Left ventricle myocardium inferior (tissue), 1 donor: ENCODE measurements at regions of chr12 and their contacts with region 1.

Region 1: GRCh38 chr12:106386813-106387535 is 29.4 kb downstream of the POLR3B start:
- DNase-seq: no peak
- H3K4me3 ChIP-seq: no peak overlapping the region
- H3K27ac ChIP-seq: no peak overlapping the region
- H3K4me1 ChIP-seq: no peaks in the 10 kb centered on the region
- H3K27me3 ChIP-seq: no peaks in the 10 kb centered on the region
- CTCF ChIP-seq: no peak

Region 2: GRCh38 chr12:106179086-106179485 is 207.9 kb before region 1 on chr12:
- intact Hi-C with region 1: no loop called
- DNase-seq: no peak
- H3K4me3 ChIP-seq: no peak overlapping the region
- H3K27ac ChIP-seq: peak overlapping the region; percentile 69
- H3K4me1 ChIP-seq: peaks cover 28% of the 10 kb centered on the region
- H3K27me3 ChIP-seq: no peaks in the 10 kb centered on the region
- CTCF ChIP-seq: no peak

Region 3: DNA sequence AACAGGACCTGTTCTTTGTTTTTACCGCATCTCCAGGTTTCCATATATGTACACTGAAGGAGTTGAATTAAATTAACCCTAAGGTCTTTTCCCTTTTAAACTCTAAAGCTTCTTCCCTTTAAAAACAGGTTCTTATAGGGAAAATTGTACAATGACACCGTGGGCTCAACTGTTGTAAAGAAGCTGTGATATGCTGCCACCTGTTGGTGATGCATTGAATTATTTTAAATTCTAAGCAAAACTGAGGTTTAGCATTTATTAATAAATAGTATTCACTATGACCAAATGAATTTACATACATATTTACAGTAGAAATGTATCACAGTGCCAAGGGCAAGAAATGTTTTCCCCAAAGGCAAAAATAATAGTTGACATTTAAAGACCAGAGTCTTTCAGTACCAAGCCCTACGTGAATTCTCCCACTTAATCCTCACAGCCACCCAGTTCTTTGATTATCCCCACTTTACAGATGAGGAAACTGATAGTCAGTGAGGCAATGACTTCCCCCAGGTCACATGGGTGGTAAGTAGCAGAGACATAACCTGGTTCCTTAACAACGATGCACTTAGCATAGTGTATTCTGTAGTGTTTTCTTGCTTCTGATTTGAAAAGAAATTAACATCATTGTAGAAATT is 533.1 kb after region 1 on chr12:
- intact Hi-C with region 1: loop called (anchors 5 kb)
- DNase-seq: no peak
- H3K4me3 ChIP-seq: no peak overlapping the region
- H3K27ac ChIP-seq: no peak overlapping the region
- H3K4me1 ChIP-seq: peaks cover 5% of the 10 kb centered on the region
- H3K27me3 ChIP-seq: no peaks in the 10 kb centered on the region
- CTCF ChIP-seq: peak; percentile 83